H1 (cell line): ENCODE measurements at regions of chr10 and their contacts with region 1.

Region 1: DNA sequence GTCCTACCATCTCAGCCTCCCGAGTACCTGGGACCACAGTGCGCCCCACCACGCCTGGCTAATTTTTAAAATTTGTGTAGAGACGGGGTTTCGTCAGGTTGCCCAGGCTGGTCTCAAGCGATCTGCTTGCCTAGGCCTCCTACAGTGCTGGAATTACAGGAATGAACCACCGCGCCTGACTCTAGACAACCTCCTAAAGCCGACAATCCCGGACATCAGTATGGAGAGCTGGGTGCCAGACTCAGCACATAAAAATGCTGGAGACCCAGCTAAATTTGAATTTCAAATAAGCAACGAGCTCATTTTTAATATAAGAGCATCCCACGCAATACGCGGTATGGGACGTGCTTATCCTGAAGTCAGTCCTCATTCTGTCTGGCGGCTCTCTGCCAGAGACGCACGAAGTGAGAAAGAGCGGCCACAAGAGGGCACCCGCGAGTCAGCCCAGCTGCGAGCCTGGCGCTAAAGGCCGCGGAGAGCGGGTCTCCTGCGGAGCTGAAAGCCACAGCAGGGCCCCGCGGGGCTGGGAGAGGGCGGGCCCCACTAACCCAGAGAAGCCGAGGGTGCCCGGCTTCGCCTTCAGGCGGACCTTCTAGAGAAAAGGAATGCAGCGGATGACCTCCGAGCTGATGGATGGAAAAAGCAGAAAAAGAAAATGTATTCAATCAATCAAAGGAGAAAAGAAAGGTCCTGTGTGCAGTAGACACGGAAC is 7.0 kb downstream of the CALY start:
- DNase-seq: peak in 1 of 2 experiments; percentile 94
- H3K4me3 ChIP-seq: peak overlapping the region in 1 of 4 experiments; percentile 49; a peak in 1 of 8 replicates
- H3K27ac ChIP-seq: no peak overlapping the region
- H3K4me1 ChIP-seq: peaks cover 0 to 23% (median 6%) of the 10 kb centered on the region in 4 experiments; a peak in 6 of 7 replicates
- H3K27me3 ChIP-seq: peaks cover 22 to 78% (median 65%) of the 10 kb centered on the region in 4 experiments
- CTCF ChIP-seq: peak; percentile 86 to 89 (median 87)
- EP300 ChIP-seq: no peak
- POLR2A ChIP-seq: no peak
- RAD21 ChIP-seq: peak; percentile 83 to 87

Region 2: GRCh38 chr10:133308421-133309110 is 21.1 kb before region 1 on chr10 and contains the starts of genes TUBGCP2 and ZNF511:
- CTCF ChIA-PET with region 1: interaction called, 24 read pairs
- POLR2A ChIA-PET with region 1: interaction called, 6 read pairs
- DNase-seq: peak in 1 of 2 experiments; percentile 95
- H3K4me3 ChIP-seq: peak within 1 kb of the TSS; percentile 71 to 85 (median 82)
- H3K27ac ChIP-seq: peak within 1 kb of the TSS; percentile 88; the same call in 1 of the 2 replicates
- H3K4me1 ChIP-seq: peaks cover 0 to 6% (median 4%) of the 10 kb centered on the region in 4 experiments; a peak in 4 of 7 replicates
- H3K27me3 ChIP-seq: no peaks in the 10 kb centered on the region
- CTCF ChIP-seq: peak in 1 of 3 experiments; percentile 32; a peak in 1 of 4 replicates
- EP300 ChIP-seq: peak in 1 of 2 experiments; percentile 40; a peak in 1 of 3 replicates
- POLR2A ChIP-seq: peak; percentile 74 to 85
- RAD21 ChIP-seq: no peak
- total RNA-seq, gene TUBGCP2: 51.9 and 54.2 TPM in 2 replicates
- total RNA-seq, gene ZNF511: 64.5 and 71.7 TPM in 2 replicates

Region 3: DNA sequence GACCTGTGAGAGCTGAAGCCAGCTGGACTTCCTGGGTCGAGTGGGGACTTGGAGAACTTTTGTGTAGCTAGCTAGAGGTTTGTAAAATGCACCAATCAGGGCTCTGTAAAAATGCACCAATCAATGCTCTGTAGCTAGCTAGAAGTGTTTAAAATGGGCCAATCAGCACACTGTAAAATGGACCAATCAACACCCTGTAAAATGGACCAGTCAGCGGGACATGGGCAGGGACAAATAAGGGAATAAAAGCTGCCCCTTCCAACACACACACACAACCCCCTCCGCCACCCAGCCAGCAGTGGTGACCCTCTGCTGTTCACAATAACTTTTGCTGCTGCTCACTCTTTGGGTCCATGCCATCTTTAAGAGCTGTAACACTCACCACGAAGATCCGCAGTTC is 13.8 kb before region 1 on chr10:
- CTCF ChIA-PET with region 1: interaction called, 23 read pairs
- POLR2A ChIA-PET with region 1: interaction called, 6 read pairs
- DNase-seq: no peak
- H3K4me3 ChIP-seq: no peak overlapping the region
- H3K27ac ChIP-seq: no peak overlapping the region
- H3K4me1 ChIP-seq: no peaks in the 10 kb centered on the region; a peak in 1 of 7 replicates
- H3K27me3 ChIP-seq: peaks cover 0 to 8% (median 4%) of the 10 kb centered on the region in 4 experiments; a peak in 5 of 7 replicates
- CTCF ChIP-seq: no peak
- EP300 ChIP-seq: no peak
- POLR2A ChIP-seq: no peak
- RAD21 ChIP-seq: no peak

Region 4: DNA sequence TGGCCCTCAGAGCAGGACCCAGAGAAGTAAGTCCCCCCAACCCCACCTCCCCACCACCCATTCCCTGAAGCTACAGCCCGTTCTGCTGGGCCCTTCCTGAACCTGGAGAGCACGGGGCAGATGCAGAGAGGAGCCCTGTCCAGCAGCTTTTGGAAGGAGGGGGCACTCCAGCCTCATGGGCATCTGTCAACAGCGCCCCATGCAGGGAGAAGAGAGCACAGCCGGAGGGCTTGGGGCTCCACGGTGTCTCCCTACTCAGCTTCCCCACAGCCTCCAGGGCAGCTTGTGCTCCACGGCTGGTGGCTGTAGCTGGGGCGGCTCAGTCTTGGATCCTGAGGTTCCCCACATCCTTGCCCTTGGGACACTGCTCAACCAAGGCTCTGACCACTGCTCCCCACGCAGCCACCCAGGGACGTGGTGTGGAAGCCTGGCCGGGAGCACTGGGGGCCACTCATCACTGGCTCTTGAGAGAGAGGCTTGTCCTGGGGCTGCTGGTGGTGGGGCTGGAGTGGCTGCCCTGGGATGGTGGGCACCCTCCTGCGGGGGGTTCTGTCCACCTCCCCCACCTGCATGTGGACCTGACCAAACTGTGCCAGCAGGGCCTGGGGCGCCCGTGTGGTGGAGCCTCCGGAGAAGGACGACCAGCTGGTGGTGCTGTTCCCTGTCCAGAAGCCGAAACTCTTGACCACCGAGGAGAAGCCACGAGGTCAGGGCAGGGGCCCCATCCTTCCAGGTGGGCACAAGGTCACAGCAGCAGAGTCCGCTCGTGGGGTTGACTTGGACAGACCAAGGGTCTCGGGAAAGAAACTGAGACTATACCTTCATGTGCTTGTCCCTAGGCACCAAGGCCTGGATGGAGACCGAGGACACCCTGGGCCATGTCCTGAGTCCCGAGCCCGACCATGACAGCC is 22.0 kb after region 1 on chr10:
- CTCF ChIA-PET with region 1: interaction called, 57 read pairs
- POLR2A ChIA-PET with region 1: interaction called, 24 read pairs
- DNase-seq: peak in 1 of 2 experiments; percentile 65
- H3K4me3 ChIP-seq: no peak overlapping the region
- H3K27ac ChIP-seq: no peak overlapping the region
- H3K4me1 ChIP-seq: peaks cover 0 to 21% (median 3%) of the 10 kb centered on the region in 4 experiments; a peak in 5 of 7 replicates
- H3K27me3 ChIP-seq: no peaks in the 10 kb centered on the region; a peak in 1 of 7 replicates
- CTCF ChIP-seq: peak in 2 of 3 experiments; percentile 57 to 59; a peak in 3 of 4 replicates
- EP300 ChIP-seq: no peak
- POLR2A ChIP-seq: no peak
- RAD21 ChIP-seq: peak; percentile 34 to 42; a peak in 3 of 4 replicates

Region 5: GRCh38 chr10:133357285-133358151 is 27.9 kb after region 1 on chr10 and contains the start of gene FUOM:
- CTCF ChIA-PET with region 1: interaction called, 57 read pairs
- POLR2A ChIA-PET with region 1: interaction called, 9 read pairs
- DNase-seq: peak; percentile 67 to 95
- H3K4me3 ChIP-seq: peak within 1 kb of the TSS; percentile 51 to 78 (median 68)
- H3K27ac ChIP-seq: no peak within 1 kb of the TSS; the same call in 1 of the 2 replicates
- H3K4me1 ChIP-seq: peaks cover 0 to 6% (median 3%) of the 10 kb centered on the region in 4 experiments; a peak in 4 of 7 replicates
- H3K27me3 ChIP-seq: peaks cover 0 to 19% (median 7%) of the 10 kb centered on the region in 4 experiments; a peak in 5 of 7 replicates
- CTCF ChIP-seq: no peak
- EP300 ChIP-seq: no peak
- POLR2A ChIP-seq: peak in 1 of 2 experiments; percentile 80; a peak in 2 of 3 replicates
- RAD21 ChIP-seq: no peak
- total RNA-seq, gene FUOM: 21.1 and 22.0 TPM in 2 replicates

Region 6: GRCh38 chr10:133378251-133379096 is 48.8 kb after region 1 on chr10:
- CTCF ChIA-PET with region 1: interaction called, 15 read pairs
- POLR2A ChIA-PET with region 1: no interaction called
- DNase-seq: peak in 1 of 2 experiments; percentile 82
- H3K4me3 ChIP-seq: peak overlapping the region; percentile 47 to 82 (median 72)
- H3K27ac ChIP-seq: no peak overlapping the region
- H3K4me1 ChIP-seq: peaks cover 0 to 3% (median under 1%) of the 10 kb centered on the region in 4 experiments; a peak in 4 of 7 replicates
- H3K27me3 ChIP-seq: peaks cover 8 to 48% (median 30%) of the 10 kb centered on the region in 4 experiments
- CTCF ChIP-seq: no peak
- EP300 ChIP-seq: no peak
- POLR2A ChIP-seq: no peak
- RAD21 ChIP-seq: no peak